ENCODE measurements at regions of chrX and their contacts with region 1.

Region 1: GRCh38 chrX:9942086-9942485 is 25.1 kb upstream of the CLDN34 start:
- DNase-seq: peak; percentile 56
- H3K4me3 Mint-ChIP-seq: peak overlapping the region; percentile 35
- H3K27ac Mint-ChIP-seq: peak overlapping the region; percentile 89
- H3K4me1 Mint-ChIP-seq: peaks cover 19% of the 10 kb centered on the region
- H3K27me3 Mint-ChIP-seq: peaks cover 26% of the 10 kb centered on the region

Region 2: GRCh38 chrX:9899640-9900111 is 42.4 kb before region 1 on chrX:
- intact Hi-C with region 1: loop called (anchors 5 kb)
- DNase-seq: no peak
- H3K4me3 Mint-ChIP-seq: no peak overlapping the region
- H3K27ac Mint-ChIP-seq: no peak overlapping the region
- H3K4me1 Mint-ChIP-seq: no peaks in the 10 kb centered on the region
- H3K27me3 Mint-ChIP-seq: peaks cover 20% of the 10 kb centered on the region

Region 3: GRCh38 chrX:10011261-10011931 is 69.3 kb after region 1 on chrX:
- intact Hi-C with region 1: no loop called
- DNase-seq: peak; percentile 19
- H3K4me3 Mint-ChIP-seq: peak overlapping the region; percentile 67
- H3K27ac Mint-ChIP-seq: peak overlapping the region; percentile 95
- H3K4me1 Mint-ChIP-seq: peaks cover 40% of the 10 kb centered on the region
- H3K27me3 Mint-ChIP-seq: peaks cover 3% of the 10 kb centered on the region

Region 4: GRCh38 chrX:11111038-11111851 is 1169.2 kb after region 1 on chrX and contains the start of gene HCCS:
- intact Hi-C with region 1: loop called (anchors 5 kb)
- DNase-seq: peak; percentile 79
- H3K4me3 Mint-ChIP-seq: peak within 1 kb of the TSS; percentile 92
- H3K27ac Mint-ChIP-seq: peak within 1 kb of the TSS; percentile 97
- H3K4me1 Mint-ChIP-seq: peaks cover 21% of the 10 kb centered on the region
- H3K27me3 Mint-ChIP-seq: no peaks in the 10 kb centered on the region
- total RNA-seq, gene HCCS: 30.6 and 31.2 TPM in 2 replicates